Activated B cell treated with CpG ODN at 0.5 μM for 24 hours (primary cell): ENCODE measurements at regions of chr6 and their contacts with region 1.

Region 1: GRCh38 chr6:152124429-152125074 is 317.1 kb downstream of the ESR1 start:
- DNase-seq: no peak
- ATAC-seq: peak; percentile 74
- H3K4me3 Mint-ChIP-seq: no peak overlapping the region
- H3K27ac Mint-ChIP-seq: no peak overlapping the region
- H3K4me1 Mint-ChIP-seq: no peaks in the 10 kb centered on the region
- H3K27me3 Mint-ChIP-seq: no peaks in the 10 kb centered on the region
- CTCF ChIP-seq: peak; percentile 42

Region 2: DNA sequence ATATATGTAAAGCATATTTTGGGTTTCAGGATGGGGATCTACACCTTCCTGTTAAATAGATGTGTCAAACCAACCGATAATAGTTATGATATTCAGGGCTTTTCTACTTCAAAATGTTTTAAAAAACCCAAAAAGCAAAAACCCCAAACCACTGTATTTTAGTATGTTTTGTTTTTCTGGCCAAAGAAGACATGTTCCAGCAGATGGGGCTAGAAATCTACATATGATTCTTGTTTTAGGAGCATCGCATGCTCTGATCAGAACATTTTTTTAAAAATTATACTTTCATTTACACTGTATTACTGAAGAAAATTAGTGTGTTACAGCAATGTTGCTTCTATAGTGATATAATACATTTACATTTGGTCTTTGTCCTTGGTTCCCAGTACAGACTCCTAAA is 683.6 kb before region 1 on chr6:
- CTCF ChIA-PET with region 1: interaction called, 5 read pairs
- POLR2A ChIA-PET with region 1: no interaction called
- intact Hi-C with region 1: loop called (anchors 1 kb)
- DNase-seq: no peak
- ATAC-seq: no peak
- H3K4me3 Mint-ChIP-seq: no peak overlapping the region
- H3K27ac Mint-ChIP-seq: no peak overlapping the region
- H3K4me1 Mint-ChIP-seq: peaks cover 20% of the 10 kb centered on the region
- H3K27me3 Mint-ChIP-seq: no peaks in the 10 kb centered on the region
- CTCF ChIP-seq: no peak

Region 3: DNA sequence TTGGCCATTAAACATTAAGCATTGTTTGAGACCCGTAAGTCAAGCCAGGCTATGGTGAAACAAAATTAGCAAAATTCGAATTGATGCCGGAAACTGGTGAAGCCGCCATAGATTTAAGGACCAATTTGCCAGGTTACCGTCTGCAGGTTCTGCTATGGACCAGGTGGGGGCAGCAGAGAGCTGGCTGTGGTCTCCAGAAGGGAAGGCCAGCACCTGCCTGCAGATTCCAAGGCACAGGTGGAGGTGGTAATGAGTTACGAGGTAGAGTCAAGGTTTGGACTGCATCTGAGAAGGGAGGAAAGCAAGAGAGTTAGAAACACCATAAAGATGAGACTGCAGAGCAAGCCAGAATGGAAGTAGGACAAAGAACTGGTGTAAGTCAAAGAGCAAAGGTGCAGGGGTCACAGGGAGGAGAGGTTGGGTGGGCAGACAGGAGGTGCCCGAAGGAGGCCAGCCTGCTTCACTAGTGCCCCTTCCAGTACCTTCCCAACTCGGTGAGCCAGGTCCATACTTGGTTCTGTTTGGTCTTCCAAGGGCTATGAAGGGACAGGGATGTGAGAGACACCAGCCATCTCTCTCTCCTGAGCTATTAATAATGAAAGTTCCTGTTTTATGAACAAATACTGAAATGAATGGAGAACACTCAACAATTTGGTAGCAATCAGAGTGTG is 448.7 kb before region 1 on chr6:
- CTCF ChIA-PET with region 1: interaction called, 23 read pairs
- POLR2A ChIA-PET with region 1: no interaction called
- intact Hi-C with region 1: loop called (anchors 1 kb)
- DNase-seq: peak; percentile 32
- ATAC-seq: peak; percentile 89
- H3K4me3 Mint-ChIP-seq: no peak overlapping the region
- H3K27ac Mint-ChIP-seq: no peak overlapping the region
- H3K4me1 Mint-ChIP-seq: peaks cover 4% of the 10 kb centered on the region
- H3K27me3 Mint-ChIP-seq: no peaks in the 10 kb centered on the region
- CTCF ChIP-seq: peak; percentile 74

Region 4: DNA sequence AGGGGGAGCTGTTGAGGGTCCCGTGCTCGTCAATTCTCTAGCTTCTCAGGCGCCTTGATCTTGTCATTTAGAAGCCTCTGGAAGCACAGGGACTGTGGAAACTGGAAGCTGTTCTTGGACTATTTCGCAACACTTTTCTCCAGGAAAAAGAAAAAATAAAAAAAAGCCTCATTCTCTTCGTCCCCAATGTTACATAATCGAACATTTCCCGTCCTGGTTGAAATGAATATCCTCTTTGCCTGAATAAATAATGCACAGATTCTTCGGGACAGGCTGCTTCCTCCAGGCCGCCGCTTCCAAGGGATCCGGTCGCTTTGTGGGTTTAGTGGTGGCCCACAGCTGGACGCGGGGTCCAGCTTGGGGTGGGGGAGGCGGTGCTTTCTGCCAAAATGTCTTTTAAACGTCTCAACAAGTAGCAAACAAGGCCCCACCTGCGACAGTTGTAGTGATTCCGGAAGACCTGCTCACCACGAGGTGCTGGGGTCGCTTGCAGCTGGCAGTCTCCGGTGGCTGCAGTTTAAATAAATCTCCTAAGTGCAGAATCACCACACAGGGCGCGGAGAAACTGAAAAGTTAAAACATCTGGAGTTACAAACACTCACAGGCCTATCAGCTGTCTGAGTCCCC is 443.0 kb before region 1 on chr6:
- CTCF ChIA-PET with region 1: interaction called, 23 read pairs
- POLR2A ChIA-PET with region 1: no interaction called
- intact Hi-C with region 1: no loop called
- DNase-seq: no peak
- ATAC-seq: peak; percentile 40
- H3K4me3 Mint-ChIP-seq: peak overlapping the region; percentile 66
- H3K27ac Mint-ChIP-seq: no peak overlapping the region
- H3K4me1 Mint-ChIP-seq: peaks cover 13% of the 10 kb centered on the region
- H3K27me3 Mint-ChIP-seq: peaks cover 2% of the 10 kb centered on the region
- CTCF ChIP-seq: no peak

Region 5: GRCh38 chr6:152206072-152206818 is 81.7 kb after region 1 on chr6:
- CTCF ChIA-PET with region 1: no interaction called
- POLR2A ChIA-PET with region 1: no interaction called
- intact Hi-C with region 1: no loop called
- DNase-seq: no peak
- ATAC-seq: no peak
- H3K4me3 Mint-ChIP-seq: no peak overlapping the region
- H3K27ac Mint-ChIP-seq: no peak overlapping the region
- H3K4me1 Mint-ChIP-seq: no peaks in the 10 kb centered on the region
- H3K27me3 Mint-ChIP-seq: no peaks in the 10 kb centered on the region
- CTCF ChIP-seq: no peak

Region 6: DNA sequence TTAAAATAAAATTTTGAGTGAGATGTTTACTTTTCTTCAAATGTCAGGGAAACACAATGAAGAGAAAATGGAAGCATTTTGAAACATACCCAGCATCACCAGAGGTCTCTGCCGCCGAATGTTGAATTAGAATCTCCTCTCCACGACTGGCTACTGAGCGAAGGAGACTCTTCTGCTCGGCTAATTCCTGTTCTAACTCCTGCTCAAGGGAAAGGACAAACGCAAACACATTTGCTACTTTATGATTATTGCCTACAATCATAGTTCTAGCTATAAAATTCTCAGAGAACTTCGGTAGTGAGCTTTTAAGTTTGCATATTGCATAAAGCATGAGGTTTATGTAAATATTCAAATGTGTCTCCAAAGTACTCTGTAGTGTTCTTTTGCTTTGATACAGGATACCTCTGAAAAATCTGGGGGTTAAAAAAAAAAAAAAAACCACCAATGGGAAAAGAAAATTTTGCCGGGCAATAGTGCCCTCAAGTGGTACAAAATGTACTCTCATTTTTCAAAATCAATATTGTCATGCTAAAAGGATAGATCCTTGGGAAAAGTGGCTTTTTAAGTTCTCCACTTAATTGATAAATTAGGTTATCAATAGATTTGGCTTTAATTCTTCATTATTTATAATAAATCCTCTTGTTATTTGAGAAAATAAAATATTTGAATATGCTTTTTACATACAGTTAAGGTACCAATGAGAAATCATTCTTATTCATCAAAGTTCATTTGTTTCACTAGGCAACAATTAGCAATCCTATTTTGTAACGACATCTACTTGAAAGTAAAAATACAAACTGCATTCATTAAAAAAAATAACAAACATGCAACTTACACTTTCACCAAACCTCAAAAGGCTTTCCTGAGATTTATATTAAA is 143.7 kb after region 1 on chr6:
- CTCF ChIA-PET with region 1: interaction called, 7 read pairs
- POLR2A ChIA-PET with region 1: no interaction called
- intact Hi-C with region 1: loop called (anchors 5 kb)
- DNase-seq: no peak
- ATAC-seq: no peak
- H3K4me3 Mint-ChIP-seq: no peak overlapping the region
- H3K27ac Mint-ChIP-seq: no peak overlapping the region
- H3K4me1 Mint-ChIP-seq: no peaks in the 10 kb centered on the region
- H3K27me3 Mint-ChIP-seq: no peaks in the 10 kb centered on the region
- CTCF ChIP-seq: no peak